ENCODE measurements at regions of chr17 and their contacts with region 1.

Region 1: GRCh38 chr17:46193626-46194392 is 580 bp upstream of the KANSL1 start:
- DNase-seq: peak; percentile 91
- H3K4me3 ChIP-seq: peak overlapping the region; percentile 78 to 86 (median 83)
- H3K27ac ChIP-seq: peak overlapping the region; percentile 61
- H3K4me1 ChIP-seq: peaks cover 24% of the 10 kb centered on the region
- H3K27me3 ChIP-seq: no peaks in the 10 kb centered on the region
- CTCF ChIP-seq: no peak

Region 2: DNA sequence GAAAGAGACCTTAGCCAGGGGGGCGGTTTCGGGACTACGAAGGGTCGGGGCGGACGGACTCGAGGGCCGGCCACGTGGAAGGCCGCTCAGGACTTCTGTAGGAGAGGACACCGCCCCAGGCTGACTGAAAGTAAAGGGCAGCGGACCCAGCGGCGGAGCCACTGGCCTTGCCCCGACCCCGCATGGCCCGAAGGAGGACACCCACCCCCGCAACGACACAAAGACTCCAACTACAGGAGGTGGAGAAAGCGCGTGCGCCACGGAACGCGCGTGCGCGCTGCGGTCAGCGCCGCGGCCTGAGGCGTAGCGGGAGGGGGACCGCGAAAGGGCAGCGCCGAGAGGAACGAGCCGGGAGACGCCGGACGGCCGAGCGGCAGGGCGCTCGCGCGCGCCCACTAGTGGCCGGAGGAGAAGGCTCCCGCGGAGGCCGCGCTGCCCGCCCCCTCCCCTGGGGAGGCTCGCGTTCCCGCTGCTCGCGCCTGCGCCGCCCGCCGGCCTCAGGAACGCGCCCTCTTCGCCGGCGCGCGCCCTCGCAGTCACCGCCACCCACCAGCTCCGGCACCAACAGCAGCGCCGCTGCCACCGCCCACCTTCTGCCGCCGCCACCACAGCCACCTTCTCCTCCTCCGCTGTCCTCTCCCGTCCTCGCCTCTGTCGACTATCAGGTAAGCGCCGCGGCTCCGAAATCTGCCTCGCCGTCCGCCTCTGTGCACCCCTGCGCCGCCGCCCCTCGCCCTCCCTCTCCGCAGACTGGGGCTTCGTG is 299.6 kb before region 1 on chr17 and contains the start of gene MAPT:
- CTCF ChIA-PET with region 1: no interaction called
- dilution Hi-C with region 1: no loop called
- in situ Hi-C with region 1: no loop called
- intact Hi-C with region 1: loop called (anchors 5 kb)
- DNase-seq: peak; percentile 87
- H3K4me3 ChIP-seq: peak within 1 kb of the TSS; percentile 54 to 70 (median 54)
- H3K27ac ChIP-seq: no peak within 1 kb of the TSS
- H3K4me1 ChIP-seq: peaks cover 10% of the 10 kb centered on the region
- H3K27me3 ChIP-seq: peaks cover 25% of the 10 kb centered on the region
- CTCF ChIP-seq: peak; percentile 71 to 74
- total RNA-seq, gene MAPT: under 0.01 to 0.54 TPM

Region 3: GRCh38 chr17:46044286-46044928 is 149.4 kb before region 1 on chr17:
- CTCF ChIA-PET with region 1: interaction called, 12 read pairs
- dilution Hi-C with region 1: no loop called
- in situ Hi-C with region 1: no loop called
- intact Hi-C with region 1: loop called (anchors 2 kb)
- DNase-seq: peak; percentile 74
- H3K4me3 ChIP-seq: no peak overlapping the region
- H3K27ac ChIP-seq: no peak overlapping the region
- H3K4me1 ChIP-seq: no peaks in the 10 kb centered on the region
- H3K27me3 ChIP-seq: no peaks in the 10 kb centered on the region
- CTCF ChIP-seq: peak; percentile 76 to 89

Region 4: GRCh38 chr17:46108550-46109110 is 85.2 kb before region 1 on chr17:
- CTCF ChIA-PET with region 1: interaction called, 8 read pairs
- dilution Hi-C with region 1: no loop called
- in situ Hi-C with region 1: no loop called
- intact Hi-C with region 1: loop called (anchors 5 kb)
- DNase-seq: no peak
- H3K4me3 ChIP-seq: no peak overlapping the region
- H3K27ac ChIP-seq: no peak overlapping the region
- H3K4me1 ChIP-seq: peaks cover 11% of the 10 kb centered on the region
- H3K27me3 ChIP-seq: no peaks in the 10 kb centered on the region
- CTCF ChIP-seq: no peak

Region 5: GRCh38 chr17:46152423-46152822 is 41.4 kb before region 1 on chr17:
- CTCF ChIA-PET with region 1: no interaction called
- dilution Hi-C with region 1: no loop called
- in situ Hi-C with region 1: no loop called
- intact Hi-C with region 1: no loop called
- DNase-seq: no peak
- H3K4me3 ChIP-seq: no peak overlapping the region
- H3K27ac ChIP-seq: no peak overlapping the region
- H3K4me1 ChIP-seq: peaks cover 6% of the 10 kb centered on the region
- H3K27me3 ChIP-seq: no peaks in the 10 kb centered on the region
- CTCF ChIP-seq: no peak

Region 6: DNA sequence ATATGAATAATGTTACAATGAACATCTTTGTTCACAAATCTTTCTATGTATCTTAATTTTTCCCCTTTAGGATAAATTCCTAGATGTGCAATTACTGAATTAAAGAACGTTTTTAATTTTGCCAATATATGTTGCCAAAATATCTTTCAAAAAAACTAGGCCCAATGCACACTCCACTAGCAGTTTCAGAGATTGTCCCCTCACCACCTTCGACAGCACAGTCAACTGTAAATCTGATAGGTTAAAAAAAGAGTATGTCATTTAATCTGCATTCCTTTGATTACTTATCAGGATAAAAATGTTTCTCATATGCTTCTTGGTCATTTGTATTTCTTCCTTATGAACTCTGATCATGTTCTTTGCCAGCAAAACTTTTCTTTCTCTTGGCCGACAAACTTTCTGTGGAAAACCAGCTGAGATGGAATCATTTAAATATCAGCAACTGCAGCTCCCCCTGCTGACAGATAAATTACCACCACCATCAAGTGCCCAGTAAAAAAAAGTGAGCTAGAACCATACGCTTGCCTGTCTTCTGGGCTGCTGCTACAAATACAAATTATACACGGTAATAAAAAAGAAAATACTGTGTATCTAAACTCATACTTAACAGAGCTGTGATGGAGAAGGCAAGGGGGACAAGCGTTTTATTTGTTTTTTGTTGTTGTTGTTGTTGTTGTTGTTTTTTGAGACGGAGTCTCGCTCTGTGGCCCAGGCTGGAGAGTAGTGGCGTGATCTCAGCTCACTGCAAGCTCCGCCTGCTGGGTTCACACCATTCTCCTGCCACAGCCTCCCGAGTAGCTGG is 19.0 kb after region 1 on chr17:
- CTCF ChIA-PET with region 1: interaction called, 18 read pairs
- dilution Hi-C with region 1: no loop called
- in situ Hi-C with region 1: no loop called
- intact Hi-C with region 1: loop called (anchors 1 kb)
- DNase-seq: peak; percentile 46
- H3K4me3 ChIP-seq: no peak overlapping the region
- H3K27ac ChIP-seq: no peak overlapping the region
- H3K4me1 ChIP-seq: no peaks in the 10 kb centered on the region
- H3K27me3 ChIP-seq: no peaks in the 10 kb centered on the region
- CTCF ChIP-seq: peak; percentile 60 to 66

Region 7: GRCh38 chr17:46274238-46274637 is 80.4 kb after region 1 on chr17:
- CTCF ChIA-PET with region 1: no interaction called
- dilution Hi-C with region 1: no loop called
- in situ Hi-C with region 1: no loop called
- intact Hi-C with region 1: no loop called
- DNase-seq: no peak
- H3K4me3 ChIP-seq: no peak overlapping the region
- H3K27ac ChIP-seq: no peak overlapping the region
- H3K4me1 ChIP-seq: no peaks in the 10 kb centered on the region
- H3K27me3 ChIP-seq: no peaks in the 10 kb centered on the region
- CTCF ChIP-seq: no peak

Measured in mammary epithelial cell (primary cell).